WTC11 (cell line): ENCODE measurements at regions of chr17 and their contacts with region 1.

Region 1: GRCh38 chr17:39164675-39165143 is 1.3 kb downstream of the ARL5C start:
- DNase-seq: peak; percentile 93
- ATAC-seq: peak; percentile 96
- H3K4me3 Mint-ChIP-seq: peak overlapping the region; percentile 94
- H3K27ac Mint-ChIP-seq: peak overlapping the region; percentile 70
- H3K4me1 Mint-ChIP-seq: peaks cover 21% of the 10 kb centered on the region
- H3K27me3 Mint-ChIP-seq: peaks cover 47% of the 10 kb centered on the region
- CTCF ChIP-seq: peak; percentile 53; the same call in 1 of the 2 replicates

Region 2: GRCh38 chr17:39014044-39014794 is 150.5 kb before region 1 on chr17:
- CTCF ChIA-PET with region 1: interaction called, 14 read pairs
- POLR2A ChIA-PET with region 1: no interaction called
- DNase-seq: no peak
- ATAC-seq: no peak
- H3K4me3 Mint-ChIP-seq: no peak overlapping the region
- H3K27ac Mint-ChIP-seq: no peak overlapping the region; the same call in 1 of the 2 replicates
- H3K4me1 Mint-ChIP-seq: peaks cover 35% of the 10 kb centered on the region
- H3K27me3 Mint-ChIP-seq: no peaks in the 10 kb centered on the region; the same call in 1 of the 2 replicates
- CTCF ChIP-seq: no peak

Region 3: GRCh38 chr17:39153599-39154051 is 11.1 kb before region 1 on chr17:
- CTCF ChIA-PET with region 1: interaction called, 130 read pairs
- POLR2A ChIA-PET with region 1: interaction called, 9 read pairs
- DNase-seq: peak; percentile 92
- ATAC-seq: peak; percentile 22
- H3K4me3 Mint-ChIP-seq: peak overlapping the region; percentile 100
- H3K27ac Mint-ChIP-seq: peak overlapping the region; percentile 13
- H3K4me1 Mint-ChIP-seq: peaks cover 21% of the 10 kb centered on the region
- H3K27me3 Mint-ChIP-seq: peaks cover 43% of the 10 kb centered on the region
- CTCF ChIP-seq: no peak

Region 4: DNA sequence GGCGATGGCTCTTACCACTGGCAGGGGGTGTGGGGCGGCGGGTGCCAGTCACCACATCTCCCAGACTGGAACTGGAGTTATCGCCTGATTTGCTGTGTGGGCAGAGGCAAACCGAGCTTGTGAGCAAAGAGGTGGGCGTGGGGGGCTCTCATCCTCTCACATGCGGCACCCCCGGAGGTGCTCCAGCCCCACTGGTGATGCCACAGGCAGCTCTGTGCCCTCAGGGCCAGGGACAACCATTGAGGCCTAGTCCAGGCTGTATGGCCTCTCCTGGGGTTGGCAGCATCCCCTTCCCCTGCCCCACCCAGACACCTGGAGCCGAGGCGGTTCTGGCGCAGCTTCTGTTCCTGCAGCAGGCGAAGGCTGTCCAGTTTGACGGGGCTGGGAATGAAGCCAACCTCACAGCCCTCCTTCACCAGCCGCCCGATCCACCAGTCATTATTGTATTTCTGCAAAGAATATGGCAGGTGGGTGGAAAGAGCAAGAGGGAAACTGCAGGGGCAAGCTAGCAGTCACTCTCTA is 21.8 kb after region 1 on chr17:
- CTCF ChIA-PET with region 1: interaction called, 11 read pairs
- POLR2A ChIA-PET with region 1: no interaction called
- DNase-seq: no peak
- ATAC-seq: no peak
- H3K4me3 Mint-ChIP-seq: no peak overlapping the region
- H3K27ac Mint-ChIP-seq: no peak overlapping the region
- H3K4me1 Mint-ChIP-seq: no peaks in the 10 kb centered on the region
- H3K27me3 Mint-ChIP-seq: no peaks in the 10 kb centered on the region
- CTCF ChIP-seq: no peak

Region 5: DNA sequence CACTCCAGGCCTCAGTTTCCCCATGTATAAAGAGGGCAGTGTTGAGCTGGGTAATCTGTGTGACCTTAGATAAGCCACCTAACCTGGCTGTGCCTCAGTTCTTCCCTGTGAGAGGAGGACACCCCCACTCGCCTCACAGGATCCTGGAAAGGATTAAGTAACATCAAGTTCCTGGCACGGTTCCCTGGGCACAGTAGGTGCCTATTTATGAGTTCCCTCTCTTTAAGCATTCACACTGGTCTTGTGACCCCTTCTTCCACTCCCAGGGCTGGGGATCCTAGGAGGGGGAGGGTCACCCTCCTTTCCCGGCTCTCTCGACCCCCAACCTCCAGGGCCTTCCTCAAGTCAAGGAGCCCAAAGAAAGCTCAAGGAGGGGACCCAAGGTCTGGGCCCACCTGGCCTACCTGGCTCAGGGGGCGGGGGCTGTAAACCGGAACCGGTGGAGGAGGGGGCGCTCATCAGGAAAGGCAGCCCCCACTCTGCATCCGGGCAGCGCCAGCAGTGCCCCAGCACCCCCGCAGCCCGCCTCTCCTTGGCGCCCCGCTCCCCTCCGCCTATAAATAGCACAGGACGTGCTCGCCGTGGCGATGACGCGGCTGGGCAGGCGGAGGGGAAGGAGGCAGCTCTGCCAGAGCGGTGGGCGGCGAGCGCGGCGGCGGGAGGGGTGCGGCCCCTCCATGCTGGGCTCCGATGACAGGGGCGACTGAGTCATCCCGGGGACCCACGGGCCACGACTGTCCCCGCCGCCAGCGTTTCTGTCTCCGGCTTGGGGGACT is 44.8 kb after region 1 on chr17:
- CTCF ChIA-PET with region 1: interaction called, 14 read pairs
- POLR2A ChIA-PET with region 1: interaction called, 4 read pairs
- DNase-seq: peak; percentile 61
- ATAC-seq: peak; percentile 8
- H3K4me3 Mint-ChIP-seq: peak overlapping the region; percentile 64
- H3K27ac Mint-ChIP-seq: no peak overlapping the region
- H3K4me1 Mint-ChIP-seq: peaks cover 47% of the 10 kb centered on the region
- H3K27me3 Mint-ChIP-seq: peaks cover 7% of the 10 kb centered on the region
- CTCF ChIP-seq: no peak

Region 6: DNA sequence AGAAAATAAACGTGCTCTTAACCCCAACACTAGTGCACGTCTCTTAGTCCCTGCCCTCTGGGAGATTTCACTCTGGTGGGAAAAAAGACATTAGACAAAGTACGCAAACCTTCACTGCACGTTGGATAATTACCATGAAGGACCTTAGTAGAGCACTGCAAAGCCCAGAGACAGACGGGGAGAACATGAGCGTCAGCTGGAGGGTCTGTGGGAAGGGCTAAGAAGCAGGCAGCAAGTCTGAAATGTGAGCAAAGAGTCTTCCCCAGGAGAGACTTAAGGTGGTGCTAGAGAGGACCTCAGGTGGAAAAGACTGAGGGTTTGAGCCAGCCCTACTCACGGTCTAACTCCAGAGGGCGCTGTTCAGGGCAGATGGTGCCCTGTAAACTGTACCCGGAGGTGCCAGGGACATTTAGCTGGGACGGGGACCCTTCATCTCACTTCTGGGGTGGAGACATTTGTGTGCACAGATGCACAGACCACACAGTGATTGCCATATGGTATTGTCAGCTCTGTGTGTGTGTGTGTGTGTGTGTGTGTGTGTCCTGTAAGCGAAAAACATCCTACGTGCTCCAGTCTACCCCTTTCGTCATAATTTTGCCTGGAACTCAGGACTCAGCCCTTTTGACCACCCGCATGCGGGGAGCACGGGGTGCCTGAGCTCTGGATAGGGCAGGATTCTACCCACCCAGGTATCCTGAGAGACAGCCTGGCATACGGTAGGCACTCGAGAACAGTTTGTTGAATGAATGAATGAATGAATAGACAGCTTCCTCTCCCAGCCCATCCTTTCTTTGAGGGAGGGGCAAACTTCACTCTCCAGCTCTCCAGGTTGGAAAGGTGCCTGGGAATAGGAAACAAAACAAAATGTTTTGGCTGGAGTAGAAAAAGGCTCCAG is 71.1 kb after region 1 on chr17:
- CTCF ChIA-PET with region 1: interaction called, 47 read pairs
- POLR2A ChIA-PET with region 1: no interaction called
- DNase-seq: peak; percentile 79
- ATAC-seq: peak; percentile 85
- H3K4me3 Mint-ChIP-seq: peak overlapping the region; percentile 35; the same call in 1 of the 2 replicates
- H3K27ac Mint-ChIP-seq: peak overlapping the region; percentile 80; the same call in 1 of the 2 replicates
- H3K4me1 Mint-ChIP-seq: peaks cover 25% of the 10 kb centered on the region
- H3K27me3 Mint-ChIP-seq: peaks cover 6% of the 10 kb centered on the region; the same call in 1 of the 2 replicates
- CTCF ChIP-seq: peak; percentile 94

Region 7: DNA sequence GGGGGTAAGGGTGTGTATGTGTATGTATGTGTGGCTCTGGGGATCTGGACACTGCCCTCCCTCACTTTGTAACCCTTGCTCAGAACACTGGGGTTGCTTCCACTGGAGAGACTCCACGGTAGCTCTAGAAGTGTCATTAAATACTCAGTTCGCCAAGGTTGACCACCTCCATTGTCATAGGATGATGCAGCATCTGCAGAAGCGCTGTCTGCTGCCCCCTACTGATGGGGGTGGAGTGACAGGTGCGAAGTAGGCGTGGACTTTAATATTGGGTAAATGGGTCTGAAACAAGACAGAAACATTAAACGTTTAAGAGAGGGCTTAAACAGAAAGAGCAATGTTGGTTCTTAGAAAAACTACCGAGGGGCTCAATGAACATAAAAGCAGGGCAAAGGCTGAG is 96.6 kb after region 1 on chr17:
- CTCF ChIA-PET with region 1: interaction called, 10 read pairs
- POLR2A ChIA-PET with region 1: no interaction called
- DNase-seq: peak; percentile 79
- ATAC-seq: peak; percentile 88
- H3K4me3 Mint-ChIP-seq: no peak overlapping the region
- H3K27ac Mint-ChIP-seq: peak overlapping the region; percentile 89
- H3K4me1 Mint-ChIP-seq: peaks cover 5% of the 10 kb centered on the region
- H3K27me3 Mint-ChIP-seq: no peaks in the 10 kb centered on the region
- CTCF ChIP-seq: peak; percentile 54